Activated CD4-positive, alpha-beta T cell treated with anti-CD3 and anti-CD28 coated beads for 36 hours (primary cell): ENCODE measurements at regions of chr11 and their contacts with region 1.

Region 1: GRCh38 chr11:67345920-67346799 is 7.2 kb downstream of the POLD4 start:
- DNase-seq: peak; percentile 45
- ATAC-seq: peak; percentile 77
- H3K4me3 Mint-ChIP-seq: no peak overlapping the region
- H3K27ac Mint-ChIP-seq: peak overlapping the region; percentile 89
- H3K4me1 Mint-ChIP-seq: peaks cover 55% of the 10 kb centered on the region
- H3K27me3 Mint-ChIP-seq: no peaks in the 10 kb centered on the region

Region 2: GRCh38 chr11:67332081-67332691 is 14.0 kb before region 1 on chr11:
- CTCF ChIA-PET with region 1: interaction called, 16 read pairs
- POLR2A ChIA-PET with region 1: no interaction called
- intact Hi-C with region 1: no loop called
- DNase-seq: no peak
- ATAC-seq: no peak
- H3K4me3 Mint-ChIP-seq: no peak overlapping the region
- H3K27ac Mint-ChIP-seq: no peak overlapping the region
- H3K4me1 Mint-ChIP-seq: no peaks in the 10 kb centered on the region
- H3K27me3 Mint-ChIP-seq: no peaks in the 10 kb centered on the region

Region 3: GRCh38 chr11:67373925-67374618 is 27.9 kb after region 1 on chr11:
- CTCF ChIA-PET with region 1: interaction called, 445 read pairs
- POLR2A ChIA-PET with region 1: no interaction called
- intact Hi-C with region 1: no loop called
- DNase-seq: peak; percentile 69
- ATAC-seq: peak; percentile 51
- H3K4me3 Mint-ChIP-seq: peak overlapping the region; percentile 71
- H3K27ac Mint-ChIP-seq: no peak overlapping the region
- H3K4me1 Mint-ChIP-seq: peaks cover 30% of the 10 kb centered on the region
- H3K27me3 Mint-ChIP-seq: peaks cover 32% of the 10 kb centered on the region

Region 4: DNA sequence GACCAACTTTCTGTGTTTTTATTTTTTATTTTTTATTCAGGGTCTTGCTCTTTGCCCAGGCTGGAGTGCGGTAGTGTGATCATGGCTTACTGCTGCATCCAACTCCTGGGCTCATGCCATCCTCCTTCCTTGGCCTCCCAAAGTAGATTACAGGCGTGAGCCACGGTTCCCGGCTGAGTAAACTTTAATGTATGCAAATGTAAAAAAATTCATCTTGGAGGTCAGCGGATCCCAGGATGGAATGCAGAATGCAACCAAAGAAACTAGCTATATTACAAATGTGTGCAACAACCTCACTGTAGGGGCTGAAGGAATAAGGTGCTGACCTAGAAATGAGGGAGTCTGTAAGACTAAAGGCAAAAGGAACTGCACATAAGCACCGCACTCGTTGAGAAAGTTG is 168.0 kb after region 1 on chr11:
- CTCF ChIA-PET with region 1: no interaction called
- POLR2A ChIA-PET with region 1: no interaction called
- intact Hi-C with region 1: no loop called
- DNase-seq: no peak
- ATAC-seq: no peak
- H3K4me3 Mint-ChIP-seq: no peak overlapping the region
- H3K27ac Mint-ChIP-seq: no peak overlapping the region
- H3K4me1 Mint-ChIP-seq: peaks cover 2% of the 10 kb centered on the region
- H3K27me3 Mint-ChIP-seq: peaks cover 2% of the 10 kb centered on the region